HEK293 (cell line): ENCODE measurements at regions of chr22 and their contacts with region 1.

Region 1: GRCh38 chr22:21020802-21021429 is 6.0 kb downstream of the P2RX6 start:
- H3K4me3 ChIP-seq: no peak overlapping the region
- H3K27ac ChIP-seq: no peak overlapping the region
- H3K4me1 ChIP-seq: no peaks in the 10 kb centered on the region
- CTCF ChIP-seq: peak; percentile 70

Region 2: GRCh38 chr22:21102659-21103267 is 81.8 kb after region 1 on chr22:
- CTCF ChIA-PET with region 1: interaction called, 10 read pairs
- POLR2A ChIA-PET with region 1: no interaction called
- H3K4me3 ChIP-seq: peak overlapping the region; percentile 29
- H3K27ac ChIP-seq: no peak overlapping the region
- H3K4me1 ChIP-seq: no peaks in the 10 kb centered on the region
- CTCF ChIP-seq: peak; percentile 99